HEK293 (cell line): ENCODE measurements at regions of chr12 and their contacts with region 1.

Region 1: DNA sequence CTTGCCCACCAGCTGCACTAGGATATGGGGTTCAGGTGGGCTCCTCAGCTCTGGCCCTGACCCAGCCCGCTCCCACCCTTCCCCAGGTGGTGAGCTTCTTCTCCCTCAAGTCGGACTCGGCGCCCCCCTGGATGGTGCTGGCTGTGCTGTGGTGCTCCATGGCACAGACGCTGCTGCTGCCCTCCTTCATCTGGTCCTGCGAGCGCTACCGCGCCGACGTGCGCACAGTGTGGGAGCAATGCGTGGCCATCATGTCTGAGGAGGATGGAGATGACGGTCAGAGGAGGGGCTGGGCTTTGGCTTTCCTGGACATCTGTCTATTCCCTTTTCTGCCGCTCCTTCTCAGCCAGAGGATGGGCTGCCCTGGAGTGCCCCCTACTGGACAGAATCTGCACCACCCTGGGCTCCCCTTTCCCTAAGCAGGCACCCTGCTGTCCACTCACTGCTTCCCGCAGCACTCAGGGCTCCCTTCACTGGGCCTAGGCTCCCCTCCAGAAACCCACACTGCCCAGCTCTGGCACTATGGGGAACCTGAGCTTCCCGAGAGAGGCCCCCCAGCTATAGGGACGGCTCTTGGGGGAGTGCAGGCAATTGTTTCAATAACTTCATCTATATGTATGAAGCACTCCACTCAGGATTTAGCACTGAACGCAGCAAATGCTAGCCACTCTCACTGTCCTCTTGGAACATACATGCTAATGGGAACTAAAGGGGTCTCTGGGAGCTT is 2.6 kb upstream of the P3H3 start:
- H3K4me3 ChIP-seq: no peak overlapping the region
- H3K27ac ChIP-seq: no peak overlapping the region
- H3K4me1 ChIP-seq: peaks cover 6% of the 10 kb centered on the region; the same call in 1 of the 2 replicates
- CTCF ChIP-seq: peak; percentile 96

Region 2: GRCh38 chr12:6672143-6672542 is 153.4 kb before region 1 on chr12:
- CTCF ChIA-PET with region 1: no interaction called
- POLR2A ChIA-PET with region 1: no interaction called
- H3K4me3 ChIP-seq: no peak overlapping the region
- H3K27ac ChIP-seq: no peak overlapping the region
- H3K4me1 ChIP-seq: no peaks in the 10 kb centered on the region
- CTCF ChIP-seq: no peak

Region 3: DNA sequence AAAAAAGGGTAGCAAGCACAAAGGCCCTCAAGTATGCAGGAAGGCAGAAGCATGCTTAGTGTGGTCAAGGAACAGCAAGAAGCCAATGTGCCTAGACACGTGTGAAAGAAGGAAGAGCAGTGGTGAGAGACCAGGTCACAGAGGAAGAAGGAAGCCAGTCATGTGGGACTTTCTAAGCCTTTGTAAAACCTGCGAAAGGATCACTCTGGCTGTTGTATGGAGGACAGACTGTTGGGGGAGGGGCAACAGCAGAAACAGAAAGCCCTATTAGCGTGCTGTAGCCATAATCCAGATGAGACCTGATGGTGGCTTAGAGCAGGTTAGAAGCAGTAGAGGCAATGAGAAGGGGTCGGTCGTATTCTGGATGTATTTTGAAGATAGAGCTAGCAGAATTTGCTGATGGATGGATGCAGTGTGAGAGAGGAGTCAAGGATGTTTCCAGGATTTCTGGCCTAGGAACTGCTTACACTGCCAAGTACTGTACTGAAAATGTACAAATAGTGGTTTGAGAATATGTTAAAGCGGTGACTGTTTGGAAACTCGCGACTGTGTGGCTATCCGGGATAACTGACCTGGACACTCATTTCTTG is 67.0 kb before region 1 on chr12:
- CTCF ChIA-PET with region 1: interaction called, 116 read pairs
- POLR2A ChIA-PET with region 1: interaction called, 14 read pairs
- H3K4me3 ChIP-seq: no peak overlapping the region
- H3K27ac ChIP-seq: no peak overlapping the region
- H3K4me1 ChIP-seq: peaks cover 6% of the 10 kb centered on the region; the same call in 1 of the 2 replicates
- CTCF ChIP-seq: no peak

Region 4: GRCh38 chr12:6778574-6779550 is 46.7 kb before region 1 on chr12:
- CTCF ChIA-PET with region 1: interaction called, 32 read pairs
- POLR2A ChIA-PET with region 1: interaction called, 4 read pairs
- H3K4me3 ChIP-seq: peak overlapping the region; percentile 23
- H3K27ac ChIP-seq: peak overlapping the region; percentile 24; the same call in 1 of the 2 replicates
- H3K4me1 ChIP-seq: peaks cover 7% of the 10 kb centered on the region
- CTCF ChIP-seq: peak; percentile 99

Region 5: DNA sequence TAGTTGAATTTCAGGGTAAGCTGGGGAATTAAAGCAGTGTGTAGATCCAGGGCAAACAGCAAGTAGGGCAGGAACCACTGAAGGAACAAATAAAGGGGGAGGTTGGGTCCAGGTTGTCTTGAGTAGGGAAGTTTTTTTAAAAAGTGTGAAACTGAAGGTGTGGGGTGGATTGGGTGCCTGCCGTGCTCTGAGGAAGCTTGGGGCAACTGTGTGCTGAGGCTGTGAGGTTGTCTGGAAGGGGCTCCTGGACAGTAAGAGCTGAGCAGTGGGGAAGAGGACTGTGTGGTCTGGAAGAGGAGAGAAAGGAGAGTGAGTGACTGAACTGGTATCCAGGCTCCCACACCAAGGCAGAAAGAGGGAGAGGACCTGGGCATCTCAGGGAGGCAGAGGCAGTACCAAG is 14.8 kb before region 1 on chr12:
- CTCF ChIA-PET with region 1: interaction called, 13 read pairs
- POLR2A ChIA-PET with region 1: interaction called, 10 read pairs
- H3K4me3 ChIP-seq: no peak overlapping the region
- H3K27ac ChIP-seq: no peak overlapping the region
- H3K4me1 ChIP-seq: no peaks in the 10 kb centered on the region
- CTCF ChIP-seq: no peak

Region 6: DNA sequence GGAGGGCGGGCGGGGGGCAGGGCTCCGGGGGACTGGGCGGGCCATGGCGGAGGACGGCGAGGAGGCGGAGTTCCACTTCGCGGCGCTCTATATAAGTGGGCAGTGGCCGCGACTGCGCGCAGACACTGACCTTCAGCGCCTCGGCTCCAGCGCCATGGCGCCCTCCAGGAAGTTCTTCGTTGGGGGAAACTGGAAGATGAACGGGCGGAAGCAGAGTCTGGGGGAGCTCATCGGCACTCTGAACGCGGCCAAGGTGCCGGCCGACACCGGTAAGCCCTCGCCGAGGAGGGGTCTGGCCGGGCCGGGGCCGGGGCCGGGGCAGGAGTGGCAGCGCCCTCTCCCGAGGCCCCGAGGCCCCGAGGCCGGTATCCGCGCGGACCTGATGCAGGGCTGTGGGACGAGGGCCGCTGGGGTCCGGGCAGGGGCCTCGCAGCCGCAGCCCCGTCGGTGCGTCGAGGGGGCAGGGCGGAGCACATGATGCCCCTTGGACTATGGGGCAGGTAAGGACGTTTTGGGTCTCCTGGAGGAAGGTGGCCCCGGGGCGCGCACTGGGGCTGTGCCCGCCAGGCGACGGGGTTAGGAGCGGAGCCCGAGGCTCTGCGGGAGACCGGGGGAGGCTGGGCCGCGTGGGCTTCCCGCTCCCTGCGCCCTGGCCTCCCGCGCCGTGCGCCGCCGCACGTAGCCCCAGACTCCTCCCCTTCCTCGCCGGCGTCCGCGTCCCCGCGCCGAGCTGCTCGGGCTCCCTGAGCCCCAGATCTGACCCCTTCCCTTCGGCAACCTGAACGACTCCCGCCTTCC is 42.1 kb after region 1 on chr12 and contains the start of gene TPI1:
- CTCF ChIA-PET with region 1: interaction called, 6 read pairs
- POLR2A ChIA-PET with region 1: interaction called, 11 read pairs
- H3K4me3 ChIP-seq: peak within 1 kb of the TSS; percentile 87
- H3K27ac ChIP-seq: peak within 1 kb of the TSS; percentile 98
- H3K4me1 ChIP-seq: peaks cover 7% of the 10 kb centered on the region
- CTCF ChIP-seq: peak; percentile 10; the same call in 1 of the 2 replicates